T-cell (primary cell): ENCODE measurements at regions of chr14 and their contacts with region 1.

Region 1: GRCh38 chr14:49867831-49868723 is 15.5 kb upstream of the NEMF start:
- DNase-seq: peak; percentile 91 to 98 (median 97)
- ATAC-seq: peak; percentile 89 to 94 (median 93)
- H3K4me3 ChIP-seq: peak overlapping the region; percentile 44 to 49
- H3K4me3 Mint-ChIP-seq: peak overlapping the region; percentile 84 to 87 (median 86)
- H3K27ac ChIP-seq: peak overlapping the region; percentile 85
- H3K27ac Mint-ChIP-seq: peak overlapping the region; percentile 97 to 98
- H3K4me1 ChIP-seq: peaks cover 21 to 35% of the 10 kb centered on the region in 2 experiments
- H3K4me1 Mint-ChIP-seq: peaks cover 12 to 28% (median 15%) of the 10 kb centered on the region in 3 donors
- H3K27me3 ChIP-seq: no peaks in the 10 kb centered on the region
- H3K27me3 Mint-ChIP-seq: no peaks in the 10 kb centered on the region

Region 2: GRCh38 chr14:49892636-49893308 is 24.7 kb after region 1 on chr14 and contains the start of gene ARF6:
- CTCF ChIA-PET with region 1: interaction called, 10 to 23 read pairs
- POLR2A ChIA-PET with region 1: interaction called in 1 of 2 experiments, 5 read pairs
- DNase-seq: peak; percentile 81 to 96 (median 90)
- ATAC-seq: peak; percentile 84 to 89 (median 88)
- H3K4me3 ChIP-seq: peak within 1 kb of the TSS; percentile 98 to 99
- H3K4me3 Mint-ChIP-seq: peak within 1 kb of the TSS; percentile 93 to 98 (median 97)
- H3K27ac ChIP-seq: peak within 1 kb of the TSS; percentile 98
- H3K27ac Mint-ChIP-seq: peak within 1 kb of the TSS; percentile 99
- H3K4me1 ChIP-seq: peaks cover 15 to 25% of the 10 kb centered on the region in 2 experiments
- H3K4me1 Mint-ChIP-seq: peaks cover 29 to 52% (median 32%) of the 10 kb centered on the region in 3 donors
- H3K27me3 ChIP-seq: no peaks in the 10 kb centered on the region
- H3K27me3 Mint-ChIP-seq: no peaks in the 10 kb centered on the region
- total RNA-seq, gene ARF6: 72.0 to 111 (median 93.6) TPM

Region 3: GRCh38 chr14:50003213-50004031 is 135.3 kb after region 1 on chr14:
- CTCF ChIA-PET with region 1: interaction called, 6 to 28 read pairs
- POLR2A ChIA-PET with region 1: interaction called, 4 to 10 read pairs
- DNase-seq: peak; percentile 59 to 86 (median 72)
- ATAC-seq: peak; percentile 40 to 47 (median 44)
- H3K4me3 ChIP-seq: peak overlapping the region; percentile 60 to 83
- H3K4me3 Mint-ChIP-seq: peak overlapping the region; percentile 73 to 78 (median 75)
- H3K27ac ChIP-seq: peak overlapping the region; percentile 100
- H3K27ac Mint-ChIP-seq: peak overlapping the region; percentile 96 to 98
- H3K4me1 ChIP-seq: peaks cover 42 to 59% of the 10 kb centered on the region in 2 experiments
- H3K4me1 Mint-ChIP-seq: peaks cover 46 to 62% (median 52%) of the 10 kb centered on the region in 3 donors
- H3K27me3 ChIP-seq: no peaks in the 10 kb centered on the region
- H3K27me3 Mint-ChIP-seq: no peaks in the 10 kb centered on the region

Region 4: GRCh38 chr14:50116181-50116956 is 248.3 kb after region 1 on chr14 and contains the start of gene VCPKMT:
- CTCF ChIA-PET with region 1: interaction called, 5 to 32 read pairs
- POLR2A ChIA-PET with region 1: interaction called, 14 to 19 read pairs
- DNase-seq: peak; percentile 90 to 98 (median 95)
- ATAC-seq: peak; percentile 98 to 100 (median 99)
- H3K4me3 ChIP-seq: peak within 1 kb of the TSS; percentile 75 to 96
- H3K4me3 Mint-ChIP-seq: peak within 1 kb of the TSS; percentile 83 to 97 (median 94)
- H3K27ac ChIP-seq: peak within 1 kb of the TSS; percentile 97
- H3K27ac Mint-ChIP-seq: peak within 1 kb of the TSS; percentile 95 to 99
- H3K4me1 ChIP-seq: peaks cover 5 to 16% of the 10 kb centered on the region in 2 experiments
- H3K4me1 Mint-ChIP-seq: peaks cover 23 to 39% (median 34%) of the 10 kb centered on the region in 3 donors
- H3K27me3 ChIP-seq: no peaks in the 10 kb centered on the region
- H3K27me3 Mint-ChIP-seq: no peaks in the 10 kb centered on the region
- total RNA-seq, gene VCPKMT: 16.3 to 24.4 (median 18.3) TPM